Natural killer cell (primary cell): ENCODE measurements at regions of chr7 and their contacts with region 1.

Region 1: GRCh38 chr7:87152107-87152844 is at the start of gene DMTF1:
- DNase-seq: peak; percentile 83 to 94
- ATAC-seq: peak; percentile 86 to 93 (median 87)
- H3K4me3 ChIP-seq: peak within 1 kb of the TSS; percentile 70
- H3K4me3 Mint-ChIP-seq: peak within 1 kb of the TSS; percentile 95
- H3K27ac ChIP-seq: peak within 1 kb of the TSS; percentile 93
- H3K27ac Mint-ChIP-seq: peak within 1 kb of the TSS; percentile 94 to 99
- H3K4me1 ChIP-seq: peaks cover 2% of the 10 kb centered on the region
- H3K4me1 Mint-ChIP-seq: peaks cover 46 to 47% of the 10 kb centered on the region in 2 donors
- H3K27me3 ChIP-seq: no peaks in the 10 kb centered on the region
- H3K27me3 Mint-ChIP-seq: no peaks in the 10 kb centered on the region
- CTCF ChIP-seq: no peak
- total RNA-seq, gene DMTF1: 154 to 178 (median 160) TPM

Region 2: DNA sequence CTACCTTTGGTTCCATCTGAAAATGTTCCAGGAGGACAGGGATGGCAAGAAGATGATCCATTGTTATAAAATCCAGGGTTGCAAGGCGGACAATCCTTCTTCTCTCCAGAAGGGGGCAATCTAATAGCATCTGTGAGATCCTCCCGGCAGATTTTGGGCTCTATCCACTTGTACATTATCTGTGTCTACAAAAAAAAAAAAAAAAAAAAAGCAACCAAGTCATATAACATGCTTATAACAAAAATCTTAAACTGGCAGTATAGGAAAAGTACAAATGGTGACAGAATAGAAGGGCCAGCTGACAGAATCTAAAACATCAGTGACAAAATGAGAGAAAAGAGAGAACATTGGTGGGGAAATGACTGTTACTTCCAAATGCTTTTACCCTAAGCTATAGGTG is 225.5 kb before region 1 on chr7:
- intact Hi-C with region 1: loop called (anchors 2 kb)
- DNase-seq: peak in 1 of 2 donors; percentile 73
- ATAC-seq: peak in 2 of 3 donors; percentile 59 to 65
- H3K4me3 ChIP-seq: no peak overlapping the region
- H3K4me3 Mint-ChIP-seq: no peak overlapping the region
- H3K27ac ChIP-seq: no peak overlapping the region
- H3K27ac Mint-ChIP-seq: no peak overlapping the region
- H3K4me1 ChIP-seq: no peaks in the 10 kb centered on the region
- H3K4me1 Mint-ChIP-seq: no peaks in the 10 kb centered on the region
- H3K27me3 ChIP-seq: no peaks in the 10 kb centered on the region
- H3K27me3 Mint-ChIP-seq: peaks cover 0 to 15% of the 10 kb centered on the region in 2 donors
- CTCF ChIP-seq: peak; percentile 69

Region 3: GRCh38 chr7:87219545-87220025 is 67.3 kb after region 1 on chr7 and contains the start of gene TMEM243:
- intact Hi-C with region 1: loop called (anchors 1 kb)
- DNase-seq: peak; percentile 74 to 92
- ATAC-seq: peak; percentile 76 to 91 (median 79)
- H3K4me3 ChIP-seq: peak within 1 kb of the TSS; percentile 98
- H3K4me3 Mint-ChIP-seq: peak within 1 kb of the TSS; percentile 99
- H3K27ac ChIP-seq: peak within 1 kb of the TSS; percentile 94
- H3K27ac Mint-ChIP-seq: peak within 1 kb of the TSS; percentile 95 to 98
- H3K4me1 ChIP-seq: peaks cover 39% of the 10 kb centered on the region
- H3K4me1 Mint-ChIP-seq: peaks cover 43% of the 10 kb centered on the region in 2 donors
- H3K27me3 ChIP-seq: no peaks in the 10 kb centered on the region
- H3K27me3 Mint-ChIP-seq: no peaks in the 10 kb centered on the region
- CTCF ChIP-seq: peak; percentile 19
- total RNA-seq, gene TMEM243: 52.5 to 61.8 (median 55.2) TPM

Region 4: DNA sequence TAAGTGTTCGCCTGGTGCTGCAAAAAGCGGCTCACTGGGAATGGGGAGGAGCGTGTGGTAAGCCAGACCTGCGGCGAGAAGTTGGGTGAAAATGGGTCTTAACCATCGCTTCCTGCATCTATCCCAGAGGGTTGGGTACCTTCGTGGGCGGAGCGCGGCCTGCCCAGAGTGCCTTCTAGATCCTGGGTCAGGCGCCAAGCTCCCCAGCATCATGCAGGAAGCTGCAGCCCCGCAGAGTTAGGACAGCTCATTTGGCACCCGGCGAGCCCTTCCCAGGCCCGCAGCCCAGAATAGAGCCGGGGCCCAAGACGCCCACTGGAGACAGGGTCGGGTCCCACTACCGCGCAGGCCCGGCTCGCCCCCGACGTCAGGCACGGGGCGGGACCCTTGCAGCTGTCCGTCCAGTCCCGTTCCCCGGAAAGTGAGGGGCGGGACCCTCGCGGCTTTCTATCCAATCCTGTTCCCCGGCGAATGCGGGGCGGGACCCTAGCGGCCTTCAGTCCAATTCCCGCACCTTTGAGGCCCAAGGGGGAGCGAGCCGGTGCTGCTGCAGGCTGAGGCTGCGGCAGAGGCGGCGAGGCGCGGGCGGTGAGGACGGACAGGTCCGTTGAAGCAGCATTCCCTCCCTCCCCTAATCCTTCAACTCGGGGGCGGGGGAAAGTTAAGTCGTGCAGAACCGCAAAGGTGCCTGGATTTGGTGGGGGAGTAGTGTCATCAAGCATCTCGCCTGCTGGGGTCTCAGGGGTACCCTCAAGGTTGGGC is 193.1 kb after region 1 on chr7 and contains the start of gene CROT:
- intact Hi-C with region 1: loop called (anchors 10 kb)
- DNase-seq: peak; percentile 93 to 95
- ATAC-seq: peak; percentile 96 to 99 (median 98)
- H3K4me3 ChIP-seq: peak within 1 kb of the TSS; percentile 95
- H3K4me3 Mint-ChIP-seq: peak within 1 kb of the TSS; percentile 92
- H3K27ac ChIP-seq: peak within 1 kb of the TSS; percentile 86
- H3K27ac Mint-ChIP-seq: peak within 1 kb of the TSS; percentile 91 to 96
- H3K4me1 ChIP-seq: peaks cover 8% of the 10 kb centered on the region
- H3K4me1 Mint-ChIP-seq: peaks cover 48 to 49% of the 10 kb centered on the region in 2 donors
- H3K27me3 ChIP-seq: no peaks in the 10 kb centered on the region
- H3K27me3 Mint-ChIP-seq: no peaks in the 10 kb centered on the region
- CTCF ChIP-seq: no peak
- total RNA-seq, gene CROT: 17.5 to 19.0 (median 17.9) TPM

Region 5: DNA sequence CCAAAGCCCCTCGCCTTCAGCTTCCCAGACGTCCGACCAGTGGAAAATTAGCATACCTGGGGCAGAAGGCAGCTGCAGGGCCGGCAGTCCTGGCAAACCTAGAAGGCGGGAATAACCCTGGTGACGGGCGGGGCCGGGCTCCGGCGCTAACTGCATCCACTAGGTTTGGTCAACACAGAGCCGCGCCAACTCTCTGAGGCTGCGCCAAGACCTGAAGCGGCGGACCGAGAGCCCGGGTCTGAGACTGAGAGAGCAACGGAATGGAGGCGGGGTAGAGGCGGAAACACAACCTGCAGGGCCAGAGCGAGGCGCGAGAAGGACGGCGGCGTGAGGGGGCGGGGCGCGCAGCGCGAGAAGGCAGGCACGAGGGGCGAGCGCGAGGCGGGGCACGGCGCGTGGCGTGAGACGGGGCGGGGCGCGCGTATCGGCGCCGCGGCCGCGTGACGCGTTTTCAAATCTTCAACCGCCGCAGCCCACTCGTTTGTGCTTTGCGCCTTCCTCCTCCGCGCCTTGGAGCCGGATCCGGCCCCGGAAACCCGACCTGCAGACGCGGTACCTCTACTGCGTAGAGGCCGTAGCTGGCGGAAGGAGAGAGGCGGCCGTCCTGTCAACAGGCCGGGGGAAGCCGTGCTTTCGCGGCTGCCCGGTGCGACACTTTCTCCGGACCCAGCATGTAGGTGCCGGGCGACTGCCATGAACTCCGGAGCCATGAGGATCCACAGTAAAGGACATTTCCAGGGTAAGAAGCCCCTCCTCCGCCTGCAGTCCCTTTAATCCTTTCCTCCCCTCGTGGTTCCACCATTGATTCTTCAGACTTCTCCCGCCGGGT is 724.0 kb after region 1 on chr7 and contains the starts of genes DBF4 and SLC25A40:
- intact Hi-C with region 1: loop called (anchors 5 kb)
- DNase-seq: peak; percentile 95 to 97
- ATAC-seq: peak; percentile 88 to 97 (median 90)
- H3K4me3 ChIP-seq: peak within 1 kb of the TSS; percentile 94
- H3K4me3 Mint-ChIP-seq: peak within 1 kb of the TSS; percentile 97
- H3K27ac ChIP-seq: peak within 1 kb of the TSS; percentile 88
- H3K27ac Mint-ChIP-seq: peak within 1 kb of the TSS; percentile 94 to 98
- H3K4me1 ChIP-seq: no peaks in the 10 kb centered on the region
- H3K4me1 Mint-ChIP-seq: peaks cover 24 to 42% of the 10 kb centered on the region in 2 donors
- H3K27me3 ChIP-seq: no peaks in the 10 kb centered on the region
- H3K27me3 Mint-ChIP-seq: no peaks in the 10 kb centered on the region
- CTCF ChIP-seq: no peak
- total RNA-seq, gene DBF4: 51.7 to 61.2 (median 54.0) TPM
- total RNA-seq, gene SLC25A40: 17.4 to 26.0 (median 22.6) TPM